Aorta (tissue), 5 donors: ENCODE measurements at regions of chr11 and their contacts with region 1.

Region 1: DNA sequence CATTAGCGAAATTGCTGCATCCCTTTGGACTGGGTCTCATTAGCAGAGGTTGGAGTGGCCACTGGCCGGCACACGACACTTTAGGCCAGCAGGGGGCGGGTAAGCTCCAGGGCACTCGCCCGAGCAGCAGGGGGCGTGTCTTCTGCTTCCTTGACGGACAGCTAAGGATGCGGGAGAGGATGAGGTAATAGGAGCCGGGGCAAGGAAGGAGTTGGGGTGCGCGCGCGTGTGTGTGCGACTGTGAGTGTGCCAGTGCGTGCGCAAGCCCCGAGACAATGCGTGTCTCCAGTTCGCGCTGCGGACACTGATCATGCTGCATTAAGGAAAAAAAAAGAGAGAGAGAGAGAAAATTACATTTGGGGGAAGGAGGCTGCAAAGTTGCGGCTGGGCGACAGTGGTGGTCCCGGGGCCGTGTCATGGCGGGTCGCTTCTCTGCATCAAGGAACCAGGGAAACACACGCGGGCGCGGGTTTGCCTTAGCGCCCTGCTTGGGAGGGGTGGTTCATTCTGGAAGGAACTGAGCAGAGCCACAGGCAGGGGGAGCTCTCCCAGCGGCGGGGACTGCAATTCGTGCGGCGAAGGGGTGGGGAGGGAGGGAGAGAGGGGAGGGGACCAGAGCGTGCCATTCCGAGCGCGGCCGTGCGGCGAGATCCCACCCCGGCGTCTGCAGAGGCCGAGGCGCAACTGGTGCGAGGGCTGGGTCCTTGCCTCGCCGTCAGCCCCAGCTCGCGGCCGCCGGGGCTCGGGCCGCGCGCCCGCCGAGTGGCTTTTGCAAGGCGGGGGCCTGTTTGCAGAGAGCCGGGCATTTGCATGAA is at the start of gene DTX4:
- DNase-seq: peak; percentile 94 to 98
- ATAC-seq: peak; percentile 97
- H3K4me3 ChIP-seq: peak within 1 kb of the TSS; percentile 50 to 82
- H3K27ac ChIP-seq: no peak within 1 kb of the TSS
- H3K4me1 ChIP-seq: no peaks in the 10 kb centered on the region
- H3K27me3 ChIP-seq: no peaks in the 10 kb centered on the region
- total RNA-seq, gene DTX4: 2.6 to 7.1 TPM

Region 2: GRCh38 chr11:59207988-59208451 is 36.3 kb after region 1 on chr11:
- intact Hi-C with region 1: loop called (anchors 1 to 2 kb)
- DNase-seq: no peak
- ATAC-seq: peak; percentile 71
- H3K4me3 ChIP-seq: no peak overlapping the region
- H3K27ac ChIP-seq: no peak overlapping the region
- H3K4me1 ChIP-seq: no peaks in the 10 kb centered on the region
- H3K27me3 ChIP-seq: no peaks in the 10 kb centered on the region

Region 3: GRCh38 chr11:59283825-59284772 is 112.4 kb after region 1 on chr11:
- intact Hi-C with region 1: loop called (anchors 1 to 2 kb)
- DNase-seq: no peak
- ATAC-seq: peak; percentile 85
- H3K4me3 ChIP-seq: no peak overlapping the region
- H3K27ac ChIP-seq: no peak overlapping the region
- H3K4me1 ChIP-seq: peaks cover 0 to 1% of the 10 kb centered on the region in 2 donors
- H3K27me3 ChIP-seq: no peaks in the 10 kb centered on the region